ENCODE measurements at regions of chr7 and their contacts with region 1.

Region 1: GRCh38 chr7:124152859-124153692 is 120.2 kb upstream of the TMEM229A start:
- DNase-seq: no peak
- ATAC-seq: peak; percentile 62

Region 2: GRCh38 chr7:124489789-124490324 is 336.8 kb after region 1 on chr7:
- intact Hi-C with region 1: no loop called
- DNase-seq: no peak
- ATAC-seq: no peak

Region 3: GRCh38 chr7:124575176-124575575 is 422.1 kb after region 1 on chr7:
- intact Hi-C with region 1: loop called in 1 of 2 experiments (anchors 5 kb)
- DNase-seq: no peak
- ATAC-seq: no peak

Region 4: DNA sequence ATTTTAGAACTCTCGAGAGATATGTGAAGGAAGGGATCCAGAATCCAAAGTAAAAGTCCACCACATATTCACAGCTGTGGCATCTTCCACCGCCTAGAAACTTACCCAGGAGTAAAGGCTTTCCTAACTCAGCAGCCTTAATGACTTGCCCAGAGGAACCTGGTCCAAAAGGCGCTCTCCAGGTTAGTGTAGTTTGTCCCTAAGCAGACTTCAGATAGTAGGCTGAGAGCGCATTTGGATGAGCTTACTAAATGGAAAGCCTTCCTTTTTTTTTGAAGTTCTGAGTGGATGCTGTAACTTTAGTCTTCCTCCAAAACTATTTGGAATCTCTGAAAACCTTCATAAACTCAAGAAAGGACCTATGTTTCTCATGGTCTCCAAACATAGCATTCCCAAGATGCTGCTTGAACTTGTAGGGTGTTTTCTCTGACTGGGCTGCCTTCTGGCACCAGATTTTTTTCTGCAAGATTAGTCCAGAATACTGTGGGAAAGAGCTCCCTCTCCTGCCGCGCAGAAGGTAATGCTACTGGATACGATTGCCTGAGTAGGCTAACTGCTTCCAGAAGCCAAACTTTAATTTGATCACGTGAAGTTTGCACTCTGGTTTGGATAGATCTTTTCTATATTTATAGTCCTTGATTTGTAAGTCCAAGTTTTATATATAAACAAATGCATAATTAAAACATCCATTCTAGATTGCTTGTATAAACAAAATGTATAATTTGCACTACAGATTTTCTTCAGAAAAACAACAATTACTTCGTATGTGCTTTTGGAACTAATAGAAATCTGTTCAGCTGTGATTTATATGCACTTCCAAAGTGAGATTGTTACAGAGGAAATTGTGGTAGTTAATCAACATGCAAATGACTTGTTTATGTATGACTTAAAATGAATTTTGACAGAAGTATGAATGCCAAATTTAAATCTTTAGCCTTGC is 632.1 kb after region 1 on chr7:
- intact Hi-C with region 1: loop called in 1 of 2 experiments (anchors 5 kb)
- DNase-seq: peak in 1 of 2 donors; percentile 29
- ATAC-seq: peak; percentile 86

Measured in left colon (tissue), 2 donors.